ENCODE measurements at regions of chr15 and their contacts with region 1.

Region 1: GRCh38 chr15:29364429-29365078 is 94.9 kb upstream of the NSMCE3 start:
- DNase-seq: peak; percentile 8
- H3K4me3 ChIP-seq: no peak overlapping the region
- H3K27ac ChIP-seq: no peak overlapping the region
- H3K4me1 ChIP-seq: no peaks in the 10 kb centered on the region
- H3K27me3 ChIP-seq: no peaks in the 10 kb centered on the region
- CTCF ChIP-seq: no peak

Region 2: DNA sequence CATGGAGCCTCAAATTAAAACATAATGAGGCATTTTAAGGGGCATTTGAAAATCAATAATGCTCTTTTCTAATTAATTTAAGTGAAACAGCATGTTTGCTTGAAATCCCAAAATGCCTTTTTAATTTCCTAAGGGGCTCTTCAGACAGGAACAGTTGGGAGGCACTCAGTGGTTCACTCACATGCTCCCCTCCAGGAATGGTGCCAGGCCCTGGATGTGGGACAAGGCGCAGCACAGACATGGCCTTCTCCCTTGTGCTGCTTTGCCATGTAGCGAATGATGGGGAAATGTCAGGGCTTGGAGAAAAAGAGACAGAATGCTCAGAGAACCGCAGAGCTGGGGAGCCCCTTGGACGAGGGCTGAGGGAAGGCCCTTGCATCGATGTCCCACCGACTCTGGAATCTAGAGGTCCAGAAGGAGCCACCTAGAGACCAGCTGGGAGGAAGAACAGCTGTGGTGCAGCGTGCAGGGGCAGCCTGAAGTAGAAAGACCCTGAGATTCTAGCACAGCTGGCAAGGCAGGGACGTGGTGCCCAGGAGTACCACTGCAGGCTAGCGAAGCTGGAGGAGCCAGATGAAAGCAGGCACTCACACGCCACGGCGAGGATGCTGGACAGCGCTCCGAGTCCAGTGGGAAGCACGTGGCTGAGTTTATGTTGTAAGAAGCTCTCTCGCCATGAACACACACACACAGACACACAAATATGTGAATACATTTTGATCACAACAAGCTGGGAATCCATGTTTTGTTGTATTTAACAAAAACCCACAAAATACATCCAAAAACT is 121.9 kb before region 1 on chr15:
- CTCF ChIA-PET with region 1: no interaction called
- dilution Hi-C with region 1: no loop called
- in situ Hi-C with region 1: no loop called
- intact Hi-C with region 1: no loop called
- DNase-seq: no peak
- H3K4me3 ChIP-seq: no peak overlapping the region
- H3K27ac ChIP-seq: no peak overlapping the region
- H3K4me1 ChIP-seq: no peaks in the 10 kb centered on the region
- H3K27me3 ChIP-seq: no peaks in the 10 kb centered on the region
- CTCF ChIP-seq: no peak

Region 3: GRCh38 chr15:29522373-29523276 is 158.1 kb after region 1 on chr15:
- CTCF ChIA-PET with region 1: no interaction called
- dilution Hi-C with region 1: loop called (anchors 25 kb)
- in situ Hi-C with region 1: no loop called
- intact Hi-C with region 1: no loop called
- DNase-seq: peak; percentile 88
- H3K4me3 ChIP-seq: no peak overlapping the region
- H3K27ac ChIP-seq: no peak overlapping the region
- H3K4me1 ChIP-seq: peaks cover 4% of the 10 kb centered on the region
- H3K27me3 ChIP-seq: no peaks in the 10 kb centered on the region
- CTCF ChIP-seq: no peak